Activated naive CD4-positive, alpha-beta T cell treated with anti-CD3 and anti-CD28 coated beads for 36 hours (primary cell): ENCODE measurements at regions of chr10 and their contacts with region 1.

Region 1: GRCh38 chr10:35126530-35127296 is at the start of gene CREM:
- DNase-seq: peak; percentile 100
- H3K4me3 Mint-ChIP-seq: peak within 1 kb of the TSS; percentile 81
- H3K27ac Mint-ChIP-seq: peak within 1 kb of the TSS; percentile 95
- H3K4me1 Mint-ChIP-seq: peaks cover 48% of the 10 kb centered on the region
- H3K27me3 Mint-ChIP-seq: no peaks in the 10 kb centered on the region
- total RNA-seq, gene CREM: 107 to 111 TPM

Region 2: DNA sequence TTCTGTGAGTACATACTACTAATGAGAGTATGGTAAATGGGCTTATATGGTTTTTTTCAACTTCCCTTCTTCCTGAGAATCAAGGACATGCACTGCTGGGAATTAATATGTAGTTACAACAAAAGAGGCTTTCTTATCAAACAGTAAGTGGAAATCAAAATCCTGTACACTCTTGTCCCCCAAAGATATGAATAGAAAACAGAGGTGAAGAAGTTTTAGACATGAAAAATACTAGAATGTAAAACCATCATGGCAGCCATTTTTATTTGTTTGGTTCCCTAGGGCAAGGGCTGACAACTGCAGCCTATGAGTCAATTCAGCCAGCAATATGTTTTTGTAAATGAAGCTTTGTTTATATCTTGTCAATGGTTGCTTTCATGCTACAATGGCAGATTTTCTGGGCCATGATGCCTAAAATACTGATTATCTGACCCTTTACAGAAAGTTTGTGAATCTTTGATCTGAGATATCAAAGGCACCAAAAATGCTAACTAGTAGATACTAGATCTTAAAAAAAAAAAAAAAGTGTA is 734.0 kb before region 1 on chr10:
- CTCF ChIA-PET with region 1: no interaction called
- intact Hi-C with region 1: no loop called
- DNase-seq: no peak
- H3K4me3 Mint-ChIP-seq: no peak overlapping the region
- H3K27ac Mint-ChIP-seq: no peak overlapping the region
- H3K4me1 Mint-ChIP-seq: no peaks in the 10 kb centered on the region
- H3K27me3 Mint-ChIP-seq: no peaks in the 10 kb centered on the region

Region 3: GRCh38 chr10:35090162-35090954 is 36.4 kb before region 1 on chr10 and contains the start of gene CUL2:
- CTCF ChIA-PET with region 1: interaction called, 6 read pairs
- intact Hi-C with region 1: loop called (anchors 1 kb)
- DNase-seq: peak; percentile 94
- H3K4me3 Mint-ChIP-seq: peak within 1 kb of the TSS; percentile 90
- H3K27ac Mint-ChIP-seq: peak within 1 kb of the TSS; percentile 92
- H3K4me1 Mint-ChIP-seq: peaks cover 45% of the 10 kb centered on the region
- H3K27me3 Mint-ChIP-seq: no peaks in the 10 kb centered on the region
- total RNA-seq, gene CUL2: 35.3 to 36.9 TPM

Region 4: GRCh38 chr10:35218339-35218955 is 91.7 kb after region 1 on chr10:
- CTCF ChIA-PET with region 1: interaction called, 223 read pairs
- intact Hi-C with region 1: loop called (anchors 1 kb)
- DNase-seq: peak; percentile 96
- H3K4me3 Mint-ChIP-seq: peak overlapping the region; percentile 47
- H3K27ac Mint-ChIP-seq: peak overlapping the region; percentile 74
- H3K4me1 Mint-ChIP-seq: peaks cover 32% of the 10 kb centered on the region
- H3K27me3 Mint-ChIP-seq: no peaks in the 10 kb centered on the region

Region 5: DNA sequence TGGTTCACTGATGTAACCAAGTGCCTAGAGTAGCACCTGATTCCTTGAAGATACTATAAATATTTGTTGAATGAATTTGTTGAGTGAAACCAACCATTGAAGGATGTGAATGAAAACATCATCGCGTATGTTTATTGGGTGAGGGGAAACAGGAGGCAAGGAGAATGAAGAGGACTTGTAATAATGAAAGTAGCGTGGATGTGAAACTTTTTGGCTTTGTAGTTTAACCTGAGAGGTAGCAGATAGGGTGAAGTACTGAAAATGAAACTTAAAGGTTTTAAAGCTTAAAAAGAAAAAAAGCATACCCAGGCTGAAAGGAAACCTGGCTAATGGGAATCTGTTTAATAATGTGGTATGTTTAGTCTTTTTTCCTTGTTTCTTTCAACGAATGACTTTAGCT is 214.8 kb after region 1 on chr10:
- CTCF ChIA-PET with region 1: interaction called, 3 read pairs
- intact Hi-C with region 1: loop called (anchors 1 kb)
- DNase-seq: no peak
- H3K4me3 Mint-ChIP-seq: no peak overlapping the region
- H3K27ac Mint-ChIP-seq: peak overlapping the region; percentile 11
- H3K4me1 Mint-ChIP-seq: peaks cover 74% of the 10 kb centered on the region
- H3K27me3 Mint-ChIP-seq: no peaks in the 10 kb centered on the region

Region 6: GRCh38 chr10:35442028-35442427 is 315.3 kb after region 1 on chr10:
- CTCF ChIA-PET with region 1: no interaction called
- intact Hi-C with region 1: loop called (anchors 2 kb)
- DNase-seq: peak; percentile 36
- H3K4me3 Mint-ChIP-seq: no peak overlapping the region
- H3K27ac Mint-ChIP-seq: peak overlapping the region; percentile 78
- H3K4me1 Mint-ChIP-seq: peaks cover 47% of the 10 kb centered on the region
- H3K27me3 Mint-ChIP-seq: no peaks in the 10 kb centered on the region

Region 7: DNA sequence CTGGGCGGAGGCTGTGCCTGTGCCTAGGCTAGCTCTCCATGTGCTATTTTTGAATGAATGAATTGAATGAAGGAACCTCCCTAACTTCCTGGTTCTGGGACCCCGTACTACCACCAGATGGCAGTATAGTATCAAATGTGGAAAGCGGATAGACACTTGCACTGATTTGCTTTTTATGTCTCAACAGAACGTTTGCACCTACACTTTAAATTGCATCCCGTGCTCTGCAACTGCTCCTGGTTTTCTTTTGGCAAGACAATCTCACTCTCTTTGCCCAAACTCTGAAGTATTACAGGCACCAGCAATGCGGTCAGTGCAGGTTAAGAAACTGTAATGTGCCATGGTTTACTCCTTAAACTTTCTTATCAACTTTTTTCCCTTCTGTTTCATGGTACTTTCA is 508.9 kb after region 1 on chr10:
- CTCF ChIA-PET with region 1: no interaction called
- intact Hi-C with region 1: loop called (anchors 2 kb)
- DNase-seq: peak; percentile 63
- H3K4me3 Mint-ChIP-seq: no peak overlapping the region
- H3K27ac Mint-ChIP-seq: no peak overlapping the region
- H3K4me1 Mint-ChIP-seq: peaks cover 7% of the 10 kb centered on the region
- H3K27me3 Mint-ChIP-seq: peaks cover 45% of the 10 kb centered on the region